Endothelial cell of umbilical vein (primary cell): ENCODE measurements at regions of chr10 and their contacts with region 1.

Region 1: GRCh38 chr10:126387023-126387921 is 1.0 kb downstream of the ADAM12 start:
- DNase-seq: peak; percentile 48
- H3K4me3 ChIP-seq: no peak overlapping the region
- H3K27ac ChIP-seq: no peak overlapping the region
- H3K4me1 ChIP-seq: no peaks in the 10 kb centered on the region
- H3K27me3 ChIP-seq: peaks cover 3 to 22% of the 10 kb centered on the region in 2 experiments
- CTCF ChIP-seq: peak; percentile 66 to 73
- POLR2A ChIP-seq: no peak

Region 2: DNA sequence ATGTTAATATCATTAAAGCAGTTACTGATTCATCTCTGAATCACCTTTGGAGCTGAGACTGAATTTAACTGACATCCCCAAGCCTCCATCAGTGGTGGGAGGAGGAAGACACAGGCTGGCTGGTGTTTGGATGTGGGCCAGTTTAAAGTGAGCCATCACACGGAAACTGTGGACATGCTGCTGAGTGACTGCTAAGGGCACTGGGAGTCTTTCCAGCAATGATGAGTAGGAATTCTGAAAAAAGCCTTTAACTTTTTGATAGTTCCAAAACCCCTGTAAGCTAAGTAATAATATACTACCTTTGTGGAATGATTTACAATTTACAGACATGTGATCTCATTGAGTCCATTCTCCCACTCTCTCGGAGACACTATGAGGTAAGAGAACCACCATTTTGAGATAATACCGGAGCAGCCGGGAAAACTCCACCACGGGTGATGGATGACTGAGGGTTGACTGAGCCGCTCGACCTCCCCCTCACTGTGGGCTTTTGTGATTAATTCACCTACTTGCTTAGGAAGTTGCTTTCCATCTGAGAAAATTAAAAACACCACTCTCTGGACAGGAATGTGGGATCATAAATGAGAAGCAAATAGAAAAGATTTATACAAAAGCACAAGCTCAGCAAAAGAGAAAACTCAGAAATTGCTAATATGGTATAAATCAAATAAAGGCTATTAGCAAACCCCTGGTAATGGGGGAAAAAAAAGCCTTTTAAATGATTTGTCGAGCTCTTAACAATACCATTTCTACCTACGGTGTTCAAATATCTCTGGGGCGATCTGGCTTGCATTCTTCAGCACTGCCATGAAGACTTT is 296.2 kb before region 1 on chr10:
- CTCF ChIA-PET with region 1: no interaction called
- POLR2A ChIA-PET with region 1: no interaction called
- dilution Hi-C with region 1: no loop called
- intact Hi-C with region 1: loop called (anchors 10 kb)
- DNase-seq: peak; percentile 37
- H3K4me3 ChIP-seq: no peak overlapping the region
- H3K27ac ChIP-seq: no peak overlapping the region
- H3K4me1 ChIP-seq: peaks cover 7% of the 10 kb centered on the region
- H3K27me3 ChIP-seq: no peaks in the 10 kb centered on the region
- CTCF ChIP-seq: no peak
- POLR2A ChIP-seq: no peak

Region 3: GRCh38 chr10:126551202-126551601 is 163.9 kb after region 1 on chr10:
- CTCF ChIA-PET with region 1: no interaction called
- POLR2A ChIA-PET with region 1: no interaction called
- dilution Hi-C with region 1: no loop called
- intact Hi-C with region 1: no loop called
- DNase-seq: no peak
- H3K4me3 ChIP-seq: no peak overlapping the region
- H3K27ac ChIP-seq: no peak overlapping the region
- H3K4me1 ChIP-seq: no peaks in the 10 kb centered on the region
- H3K27me3 ChIP-seq: no peaks in the 10 kb centered on the region
- CTCF ChIP-seq: no peak
- POLR2A ChIP-seq: no peak